ENCODE measurements at regions of chr14 and their contacts with region 1.

Region 1: GRCh38 chr14:64510825-64511671 is 6.5 kb downstream of the ZBTB1 start:
- H3K4me3 Mint-ChIP-seq: peak overlapping the region; percentile 62
- H3K27ac Mint-ChIP-seq: peak overlapping the region; percentile 83
- H3K4me1 Mint-ChIP-seq: peaks cover 67% of the 10 kb centered on the region
- H3K27me3 Mint-ChIP-seq: no peaks in the 10 kb centered on the region

Region 2: GRCh38 chr14:64465191-64465822 is 45.7 kb before region 1 on chr14 and contains the start of gene AKAP5:
- intact Hi-C with region 1: loop called (anchors 5 kb)
- H3K4me3 Mint-ChIP-seq: peak within 1 kb of the TSS; percentile 83
- H3K27ac Mint-ChIP-seq: peak within 1 kb of the TSS; percentile 48
- H3K4me1 Mint-ChIP-seq: peaks cover 26% of the 10 kb centered on the region
- H3K27me3 Mint-ChIP-seq: peaks cover 30% of the 10 kb centered on the region

Region 3: GRCh38 chr14:64478634-64479250 is 32.3 kb before region 1 on chr14:
- intact Hi-C with region 1: no loop called
- H3K4me3 Mint-ChIP-seq: no peak overlapping the region
- H3K27ac Mint-ChIP-seq: no peak overlapping the region
- H3K4me1 Mint-ChIP-seq: peaks cover 14% of the 10 kb centered on the region
- H3K27me3 Mint-ChIP-seq: no peaks in the 10 kb centered on the region